GM13976 (cell line): ENCODE measurements at regions of chr11 and their contacts with region 1.

Region 1: GRCh38 chr11:94543695-94544645 is at the start of gene FUT4:
- DNase-seq: peak; percentile 87
- CTCF ChIP-seq: no peak

Region 2: GRCh38 chr11:94593030-94593429 is 49.1 kb after region 1 on chr11:
- in situ Hi-C with region 1: loop called (anchors 10 kb)
- DNase-seq: no peak
- CTCF ChIP-seq: no peak